ENCODE measurements at regions of chr13 and their contacts with region 1.

Region 1: GRCh38 chr13:71320452-71320851 is 546.6 kb downstream of the DACH1 start:
- DNase-seq: peak; percentile 41
- ATAC-seq: peak; percentile 60; the same call in 1 of the 2 replicates
- H3K4me3 ChIP-seq: no peak overlapping the region
- H3K27ac ChIP-seq: no peak overlapping the region
- H3K4me1 ChIP-seq: no peaks in the 10 kb centered on the region
- H3K27me3 ChIP-seq: no peaks in the 10 kb centered on the region
- CTCF ChIP-seq: peak; percentile 60
- POLR2A ChIP-seq: no peak
- RAD21 ChIP-seq: peak; percentile 61

Region 2: GRCh38 chr13:71672512-71672911 is 352.1 kb after region 1 on chr13:
- CTCF ChIA-PET with region 1: no interaction called
- POLR2A ChIA-PET with region 1: interaction called, 3 read pairs
- dilution Hi-C with region 1: no loop called
- in situ Hi-C with region 1: no loop called
- intact Hi-C with region 1: loop called (anchors 2 kb)
- DNase-seq: peak; percentile 21
- ATAC-seq: no peak
- H3K4me3 ChIP-seq: no peak overlapping the region
- H3K27ac ChIP-seq: no peak overlapping the region
- H3K4me1 ChIP-seq: no peaks in the 10 kb centered on the region
- H3K27me3 ChIP-seq: no peaks in the 10 kb centered on the region
- CTCF ChIP-seq: peak; percentile 34; the same call in 1 of the 2 replicates
- POLR2A ChIP-seq: no peak
- RAD21 ChIP-seq: 0 out of 2 replicates have a peak, but pooled peaks have one; percentile 11

Measured in IMR-90 (cell line).